BJ (cell line): ENCODE measurements at regions of chr22 and their contacts with region 1.

Region 1: GRCh38 chr22:19543970-19544708 is 19.9 kb upstream of the CLDN5 start:
- DNase-seq: no peak
- H3K4me3 ChIP-seq: no peak overlapping the region
- H3K27me3 ChIP-seq: peaks cover 5% of the 10 kb centered on the region; the same call in 1 of the 2 replicates
- CTCF ChIP-seq: no peak

Region 2: DNA sequence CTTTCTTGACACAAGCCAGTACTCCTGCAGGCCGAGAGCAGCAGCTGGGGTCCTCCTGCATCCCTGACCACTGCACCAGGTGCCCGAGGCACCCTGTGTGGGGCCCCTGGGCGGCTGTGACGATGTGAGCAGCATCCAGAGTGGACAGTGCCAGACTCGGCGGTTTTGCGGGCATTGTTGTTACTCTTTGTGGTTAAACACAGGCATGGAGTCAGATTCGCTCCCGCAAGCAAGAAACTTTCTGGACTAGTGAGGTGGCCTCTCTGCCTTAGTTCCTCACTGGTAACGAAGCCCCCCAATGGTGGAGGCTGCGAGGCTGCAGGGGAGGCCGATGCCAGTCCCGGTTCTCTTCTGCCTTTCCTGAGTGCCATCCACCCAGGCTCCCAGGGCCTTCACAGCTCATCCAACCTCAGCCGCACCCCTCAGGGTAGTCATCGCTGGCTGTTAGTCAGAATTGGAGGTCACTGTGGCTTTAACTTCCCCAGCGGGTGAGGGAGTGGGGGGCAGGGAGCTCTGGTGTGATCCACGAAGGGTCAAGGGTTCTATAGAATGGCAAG is 16.2 kb before region 1 on chr22:
- CTCF ChIA-PET with region 1: no interaction called
- POLR2A ChIA-PET with region 1: no interaction called
- DNase-seq: no peak
- H3K4me3 ChIP-seq: no peak overlapping the region
- H3K27me3 ChIP-seq: peaks cover 3% of the 10 kb centered on the region
- CTCF ChIP-seq: no peak

Region 3: GRCh38 chr22:19691721-19692341 is 147.7 kb after region 1 on chr22:
- CTCF ChIA-PET with region 1: no interaction called
- POLR2A ChIA-PET with region 1: interaction called, 11 read pairs
- DNase-seq: peak; percentile 22
- H3K4me3 ChIP-seq: no peak overlapping the region
- H3K27me3 ChIP-seq: peaks cover 13% of the 10 kb centered on the region
- CTCF ChIP-seq: no peak